Panc1 (cell line): ENCODE measurements at regions of chr10 and their contacts with region 1.

Region 1: GRCh38 chr10:49579621-49580020 is 30.5 kb upstream of the SLC18A3 start:
- DNase-seq: no peak
- ATAC-seq: no peak
- H3K4me3 ChIP-seq: no peak overlapping the region
- H3K27ac ChIP-seq: no peak overlapping the region
- H3K4me1 ChIP-seq: no peaks in the 10 kb centered on the region
- H3K27me3 ChIP-seq: peaks cover 4% of the 10 kb centered on the region; the same call in 1 of the 2 replicates
- CTCF ChIP-seq: no peak

Region 2: DNA sequence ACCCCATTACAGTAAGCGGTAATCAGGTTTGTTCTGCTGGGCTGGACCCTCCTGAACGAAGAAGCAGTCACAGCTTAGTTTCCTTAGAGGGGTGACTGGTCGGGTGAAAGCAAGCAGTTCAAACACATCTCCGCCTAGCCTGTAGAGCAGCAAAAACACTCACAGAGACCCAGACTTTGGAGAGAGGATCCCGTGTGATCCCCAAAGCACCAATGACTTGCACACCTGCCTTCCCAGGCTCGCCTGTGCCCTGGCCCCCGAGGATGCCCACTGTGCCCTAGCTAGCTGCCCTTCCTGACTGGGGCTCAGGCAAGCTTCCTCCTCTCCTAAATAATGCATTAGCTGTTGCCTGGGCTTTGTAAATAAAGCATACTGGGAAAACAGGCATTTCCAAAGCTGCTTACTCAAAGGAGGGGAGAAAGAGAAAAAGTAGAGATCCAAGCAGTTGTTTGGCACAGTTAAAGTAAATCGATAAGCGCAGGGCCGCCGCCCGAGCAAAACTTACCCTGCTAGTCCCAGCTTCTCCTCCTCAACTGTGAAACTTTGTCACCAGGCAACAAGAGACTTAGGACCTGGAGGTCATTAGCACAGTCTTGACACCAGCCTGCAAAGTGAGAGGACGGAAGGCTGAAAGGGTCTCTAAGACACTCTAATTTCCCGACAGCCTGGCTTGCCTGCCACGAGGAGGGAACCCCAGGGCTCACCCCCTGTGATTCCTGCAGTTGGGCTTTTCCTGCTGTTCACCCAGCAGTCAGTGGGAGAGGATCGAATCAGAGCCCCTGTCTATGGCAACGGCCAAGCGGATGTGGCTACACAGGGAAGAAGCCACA is 644.7 kb before region 1 on chr10:
- CTCF ChIA-PET with region 1: no interaction called
- POLR2A ChIA-PET with region 1: interaction called, 10 read pairs
- in situ Hi-C with region 1: no loop called
- intact Hi-C with region 1: no loop called
- DNase-seq: no peak
- ATAC-seq: peak; percentile 48; the same call in 1 of the 2 replicates
- H3K4me3 ChIP-seq: no peak overlapping the region
- H3K27ac ChIP-seq: no peak overlapping the region
- H3K4me1 ChIP-seq: no peaks in the 10 kb centered on the region
- H3K27me3 ChIP-seq: peaks cover 8% of the 10 kb centered on the region; the same call in 1 of the 2 replicates
- CTCF ChIP-seq: no peak

Region 3: GRCh38 chr10:49711516-49711915 is 131.9 kb after region 1 on chr10:
- CTCF ChIA-PET with region 1: no interaction called
- POLR2A ChIA-PET with region 1: no interaction called
- in situ Hi-C with region 1: no loop called
- intact Hi-C with region 1: no loop called
- DNase-seq: no peak
- ATAC-seq: no peak
- H3K4me3 ChIP-seq: no peak overlapping the region
- H3K27ac ChIP-seq: no peak overlapping the region
- H3K4me1 ChIP-seq: no peaks in the 10 kb centered on the region
- H3K27me3 ChIP-seq: peaks cover 5% of the 10 kb centered on the region; the same call in 1 of the 2 replicates
- CTCF ChIP-seq: no peak